Prostate gland (tissue), 2 donors: ENCODE measurements at regions of chr2 and their contacts with region 1.

Region 1: DNA sequence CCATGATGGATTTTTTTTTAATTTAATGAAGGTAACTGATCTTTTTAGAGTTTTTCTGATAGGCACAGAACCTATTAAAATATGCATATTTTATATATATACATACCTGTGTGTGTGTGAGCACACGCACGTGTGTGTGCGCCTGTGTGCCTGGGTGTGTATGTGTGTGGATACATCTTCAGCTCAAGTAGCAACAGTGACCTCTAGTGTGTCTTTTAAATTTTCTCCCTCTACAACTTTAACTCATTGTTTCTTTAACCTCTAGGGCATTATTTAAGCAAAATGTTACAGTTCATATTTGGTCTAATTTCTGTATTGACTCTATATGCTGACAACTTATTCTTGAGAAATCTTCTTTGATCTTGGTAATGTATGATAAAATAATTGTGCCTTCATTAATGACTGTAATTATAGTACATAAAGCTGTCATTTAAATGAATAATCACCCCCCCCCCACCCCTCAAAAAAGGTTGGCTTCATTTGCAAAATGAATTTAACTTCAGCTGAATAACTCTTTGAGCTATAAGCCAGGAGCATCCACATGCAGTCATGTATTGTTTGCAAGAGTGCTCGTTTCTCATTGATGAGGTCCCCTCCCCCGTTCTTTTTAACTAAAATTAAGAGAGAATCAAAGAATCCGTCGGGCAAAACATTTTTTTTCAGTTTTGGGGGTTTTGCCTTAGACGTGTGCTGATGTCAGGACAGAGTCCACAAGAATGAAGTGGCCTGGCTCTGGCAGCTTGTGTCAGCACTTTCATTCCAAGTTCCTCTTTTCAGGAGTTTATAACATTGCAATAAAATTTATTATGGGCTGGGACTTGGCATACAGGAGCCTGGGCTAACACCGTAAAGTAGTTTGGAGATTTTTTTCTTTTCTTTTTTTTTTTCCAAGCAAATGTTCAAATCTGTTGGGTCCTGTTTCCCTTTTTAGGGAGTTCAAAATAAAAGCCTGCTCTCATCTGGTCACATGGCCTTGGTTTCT is 80.0 kb downstream of the ETAA1 start:
- DNase-seq: peak; percentile 61
- H3K4me3 ChIP-seq: no peak overlapping the region
- H3K27ac ChIP-seq: no peak overlapping the region
- H3K4me1 ChIP-seq: no peaks in the 10 kb centered on the region
- H3K27me3 ChIP-seq: peaks cover 4% of the 10 kb centered on the region
- CTCF ChIP-seq: peak; percentile 4 to 47 (median 30)
- POLR2A ChIP-seq: no peak

Region 2: GRCh38 chr2:66587216-66587615 is 889.9 kb before region 1 on chr2:
- intact Hi-C with region 1: loop called (anchors 10 kb)
- DNase-seq: no peak
- H3K4me3 ChIP-seq: no peak overlapping the region
- H3K27ac ChIP-seq: no peak overlapping the region
- H3K4me1 ChIP-seq: no peaks in the 10 kb centered on the region
- H3K27me3 ChIP-seq: peaks cover 5% of the 10 kb centered on the region
- CTCF ChIP-seq: peak in 1 of 4 experiments; percentile 6
- POLR2A ChIP-seq: no peak

Region 3: GRCh38 chr2:66803726-66804125 is 673.4 kb before region 1 on chr2:
- intact Hi-C with region 1: loop called (anchors 10 kb)
- DNase-seq: no peak
- H3K4me3 ChIP-seq: no peak overlapping the region
- H3K27ac ChIP-seq: no peak overlapping the region
- H3K4me1 ChIP-seq: no peaks in the 10 kb centered on the region
- H3K27me3 ChIP-seq: no peaks in the 10 kb centered on the region
- CTCF ChIP-seq: no peak
- POLR2A ChIP-seq: no peak

Region 4: DNA sequence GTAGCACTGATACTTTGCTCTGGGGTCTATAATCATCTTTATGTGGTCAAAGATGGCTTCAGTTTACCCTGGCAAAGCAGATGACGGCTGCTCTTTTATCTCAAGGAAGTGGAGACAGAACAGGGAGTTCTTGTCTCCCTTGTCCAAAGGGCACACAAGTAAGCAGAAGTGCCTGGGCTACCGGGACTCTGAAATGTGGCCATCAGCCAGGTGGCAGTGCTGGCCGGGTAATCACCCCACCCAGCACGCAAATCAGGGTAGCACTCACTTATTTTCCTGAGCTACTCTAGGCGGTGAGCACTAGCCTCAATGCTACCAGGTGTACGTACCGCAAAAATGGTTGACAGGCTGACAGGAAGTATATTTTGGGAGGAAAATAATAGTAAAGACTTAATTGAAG is 199.7 kb before region 1 on chr2:
- intact Hi-C with region 1: no loop called
- DNase-seq: peak; percentile 6
- H3K4me3 ChIP-seq: no peak overlapping the region
- H3K27ac ChIP-seq: no peak overlapping the region
- H3K4me1 ChIP-seq: no peaks in the 10 kb centered on the region
- H3K27me3 ChIP-seq: no peaks in the 10 kb centered on the region
- CTCF ChIP-seq: no peak
- POLR2A ChIP-seq: no peak

Region 5: DNA sequence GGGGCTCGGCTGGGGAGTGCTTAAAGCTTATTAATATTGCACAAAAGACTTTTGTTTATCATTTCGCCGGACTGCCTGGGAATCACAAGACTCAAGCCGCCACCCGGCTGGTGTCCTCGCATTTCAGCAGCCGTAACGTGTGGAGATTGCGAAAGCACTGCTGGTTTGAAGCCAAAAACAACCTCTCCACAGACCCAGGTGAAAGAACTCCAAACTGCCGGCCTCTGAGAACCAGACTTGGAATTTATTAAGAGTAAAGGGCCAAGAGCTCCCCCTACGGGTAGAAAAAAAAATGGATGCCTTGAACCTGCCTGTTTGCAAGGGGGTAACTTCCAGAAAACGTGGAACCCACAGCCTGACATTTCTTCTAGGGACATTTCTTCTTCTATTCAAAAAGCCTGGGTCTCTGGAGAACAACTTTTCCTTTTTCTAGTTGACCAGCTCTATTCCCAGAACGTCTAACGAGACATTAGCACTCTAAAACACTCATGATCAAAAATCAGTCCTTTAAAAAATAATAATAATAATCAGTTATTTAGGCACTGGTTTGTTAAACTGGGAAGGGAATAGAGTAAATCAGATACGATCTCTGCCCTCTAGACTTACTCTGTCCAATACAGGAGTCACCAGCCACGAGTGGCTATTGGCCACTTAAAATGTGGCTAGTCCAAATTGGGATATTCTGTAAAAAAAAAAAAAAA is 369.4 kb after region 1 on chr2:
- intact Hi-C with region 1: loop called (anchors 5 kb)
- DNase-seq: peak; percentile 95
- H3K4me3 ChIP-seq: no peak overlapping the region
- H3K27ac ChIP-seq: peak overlapping the region; percentile 44 to 63
- H3K4me1 ChIP-seq: no peaks in the 10 kb centered on the region
- H3K27me3 ChIP-seq: no peaks in the 10 kb centered on the region
- CTCF ChIP-seq: peak; percentile 35 to 83 (median 72)
- POLR2A ChIP-seq: no peak